ENCODE measurements at regions of chr1 and their contacts with region 1.

Region 1: DNA sequence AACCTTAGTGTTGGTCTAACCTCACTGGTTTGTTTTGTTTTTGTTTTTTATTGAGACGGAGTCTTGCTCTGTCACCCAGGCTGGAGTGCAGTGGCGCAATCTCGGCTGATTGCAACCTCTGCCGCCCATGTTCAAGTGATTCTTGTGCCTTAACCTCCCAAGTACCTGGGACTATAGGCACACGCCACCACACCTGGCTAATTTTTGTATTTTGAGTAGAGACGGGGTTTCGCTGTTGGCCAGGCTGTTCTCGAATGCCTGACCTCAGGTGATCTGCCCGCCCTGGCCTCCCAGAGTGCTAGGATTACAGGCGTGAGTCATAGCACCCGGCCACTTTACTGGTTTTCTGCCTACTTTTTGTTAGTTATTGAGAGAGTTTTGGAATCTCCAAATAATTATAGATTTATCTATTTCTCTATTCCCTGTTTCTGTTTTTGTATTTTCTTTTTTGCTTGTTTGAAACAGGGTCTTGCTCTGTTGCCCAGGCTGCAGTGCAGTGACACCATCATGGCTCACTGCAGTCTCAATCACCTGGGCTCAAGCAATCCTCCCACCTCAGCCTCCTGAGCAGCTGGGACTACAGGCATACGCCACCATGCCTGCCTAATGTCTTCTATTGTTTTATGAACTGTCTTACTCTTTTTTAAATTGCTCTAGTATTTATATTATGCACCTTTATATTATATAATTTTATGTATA is 21.4 kb downstream of the SMG7 start:
- DNase-seq: no peak
- ATAC-seq: no peak; the same call in 2 of the 3 replicates
- H3K4me3 ChIP-seq: no peak overlapping the region
- H3K27ac ChIP-seq: no peak overlapping the region
- H3K4me1 ChIP-seq: peaks cover 9% of the 10 kb centered on the region
- H3K27me3 ChIP-seq: no peaks in the 10 kb centered on the region
- CTCF ChIP-seq: no peak
- EP300 ChIP-seq: no peak
- POLR2A ChIP-seq: no peak
- RAD21 ChIP-seq: no peak

Region 2: DNA sequence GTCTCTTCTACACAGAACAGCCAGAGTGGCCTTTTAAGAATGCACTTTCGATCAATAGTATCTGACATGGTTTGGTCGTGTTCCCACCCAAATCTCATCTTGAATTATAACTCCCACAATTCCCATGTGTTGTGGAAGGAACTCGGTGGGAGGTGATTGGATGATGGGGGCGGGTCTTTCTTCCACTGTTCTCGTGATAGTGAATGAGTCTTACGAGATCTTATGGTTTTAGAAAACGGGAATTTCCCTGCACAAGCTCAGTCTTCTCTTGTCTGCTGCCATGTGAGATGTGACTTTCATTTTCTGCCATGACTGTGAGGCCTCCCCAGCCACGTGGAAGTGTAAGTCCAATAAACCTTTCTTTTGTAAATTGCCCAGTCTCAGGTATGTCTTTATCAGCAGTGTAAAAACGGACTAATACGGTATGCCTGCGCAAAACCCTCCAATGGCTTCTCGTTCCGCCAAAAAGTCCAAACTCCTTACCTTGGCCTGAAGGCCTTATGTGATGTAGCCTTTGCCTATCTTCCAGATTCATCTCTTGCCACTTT is 44.4 kb before region 1 on chr1:
- CTCF ChIA-PET with region 1: no interaction called
- POLR2A ChIA-PET with region 1: no interaction called
- RAD21 ChIA-PET with region 1: no interaction called
- SMC1A ChIA-PET with region 1: no interaction called
- in situ Hi-C with region 1: loop called (anchors 5 kb)
- intact Hi-C with region 1: no loop called
- DNase-seq: no peak
- ATAC-seq: no peak
- H3K4me3 ChIP-seq: no peak overlapping the region
- H3K27ac ChIP-seq: no peak overlapping the region
- H3K4me1 ChIP-seq: no peaks in the 10 kb centered on the region
- H3K27me3 ChIP-seq: no peaks in the 10 kb centered on the region
- CTCF ChIP-seq: no peak
- EP300 ChIP-seq: no peak
- POLR2A ChIP-seq: no peak
- RAD21 ChIP-seq: no peak

Region 3: GRCh38 chr1:183508694-183509093 is 15.0 kb after region 1 on chr1:
- CTCF ChIA-PET with region 1: interaction called, 4 read pairs
- POLR2A ChIA-PET with region 1: interaction called, 7 read pairs
- RAD21 ChIA-PET with region 1: interaction called, 4 read pairs
- SMC1A ChIA-PET with region 1: interaction called, 13 read pairs
- in situ Hi-C with region 1: no loop called
- intact Hi-C with region 1: no loop called
- DNase-seq: no peak
- ATAC-seq: no peak
- H3K4me3 ChIP-seq: no peak overlapping the region
- H3K27ac ChIP-seq: no peak overlapping the region
- H3K4me1 ChIP-seq: no peaks in the 10 kb centered on the region
- H3K27me3 ChIP-seq: no peaks in the 10 kb centered on the region
- CTCF ChIP-seq: no peak
- EP300 ChIP-seq: no peak
- POLR2A ChIP-seq: no peak
- RAD21 ChIP-seq: no peak

Region 4: GRCh38 chr1:183753464-183753891 is 259.8 kb after region 1 on chr1:
- CTCF ChIA-PET with region 1: no interaction called
- POLR2A ChIA-PET with region 1: no interaction called
- RAD21 ChIA-PET with region 1: no interaction called
- SMC1A ChIA-PET with region 1: no interaction called
- in situ Hi-C with region 1: no loop called
- intact Hi-C with region 1: no loop called
- DNase-seq: no peak
- ATAC-seq: no peak
- H3K4me3 ChIP-seq: no peak overlapping the region
- H3K27ac ChIP-seq: no peak overlapping the region
- H3K4me1 ChIP-seq: no peaks in the 10 kb centered on the region
- H3K27me3 ChIP-seq: no peaks in the 10 kb centered on the region
- CTCF ChIP-seq: no peak
- EP300 ChIP-seq: no peak
- POLR2A ChIP-seq: no peak
- RAD21 ChIP-seq: no peak